ENCODE measurements at regions of chr7 and their contacts with region 1.

Region 1: DNA sequence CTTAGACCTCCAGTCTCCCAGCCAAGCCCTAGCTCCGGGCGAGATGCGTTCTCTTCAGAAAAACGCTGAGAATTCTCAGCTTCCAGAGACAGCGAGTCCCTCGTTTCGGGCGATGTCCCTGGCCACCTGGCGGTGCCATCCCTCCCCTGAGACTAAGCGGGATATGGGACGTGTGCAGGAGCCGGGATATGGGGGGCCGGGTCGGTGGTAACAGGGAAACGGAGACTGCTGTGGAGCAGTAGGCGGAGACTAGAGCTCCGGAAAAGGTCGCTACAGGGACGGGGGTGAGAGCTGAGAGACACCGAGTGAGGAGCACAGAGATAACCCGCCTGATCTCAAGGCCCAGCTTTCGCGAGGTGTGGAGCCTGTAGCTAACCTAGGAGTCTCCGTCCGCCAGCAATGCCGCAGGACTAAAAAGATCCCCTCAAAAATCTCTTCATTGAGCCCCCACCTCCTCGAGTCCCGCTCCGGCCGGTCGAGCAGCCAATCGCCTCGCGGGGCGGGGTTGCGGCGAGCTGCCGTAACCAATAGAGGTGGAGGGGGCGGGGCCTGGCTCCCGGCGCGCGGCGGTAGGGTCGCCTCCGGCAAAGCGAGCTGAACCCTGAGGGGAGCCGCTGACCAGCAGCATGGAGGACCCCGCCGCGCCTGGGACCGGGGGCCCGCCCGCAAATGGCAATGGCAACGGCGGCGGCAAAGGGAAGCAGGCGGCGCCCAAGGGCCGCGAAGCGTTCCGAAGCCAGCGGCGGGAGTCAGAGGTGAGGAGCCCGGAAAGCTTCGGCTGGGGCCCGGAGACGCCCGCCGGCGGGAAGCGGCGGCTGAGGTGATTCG is at the start of gene STRIP2:
- DNase-seq: peak; percentile 94
- H3K4me3 Mint-ChIP-seq: peak within 1 kb of the TSS; percentile 95
- H3K27ac Mint-ChIP-seq: peak within 1 kb of the TSS; percentile 92
- H3K4me1 Mint-ChIP-seq: peaks cover 35% of the 10 kb centered on the region
- H3K27me3 Mint-ChIP-seq: no peaks in the 10 kb centered on the region
- total RNA-seq, gene STRIP2: 74.0 and 79.4 TPM in 2 replicates

Region 2: DNA sequence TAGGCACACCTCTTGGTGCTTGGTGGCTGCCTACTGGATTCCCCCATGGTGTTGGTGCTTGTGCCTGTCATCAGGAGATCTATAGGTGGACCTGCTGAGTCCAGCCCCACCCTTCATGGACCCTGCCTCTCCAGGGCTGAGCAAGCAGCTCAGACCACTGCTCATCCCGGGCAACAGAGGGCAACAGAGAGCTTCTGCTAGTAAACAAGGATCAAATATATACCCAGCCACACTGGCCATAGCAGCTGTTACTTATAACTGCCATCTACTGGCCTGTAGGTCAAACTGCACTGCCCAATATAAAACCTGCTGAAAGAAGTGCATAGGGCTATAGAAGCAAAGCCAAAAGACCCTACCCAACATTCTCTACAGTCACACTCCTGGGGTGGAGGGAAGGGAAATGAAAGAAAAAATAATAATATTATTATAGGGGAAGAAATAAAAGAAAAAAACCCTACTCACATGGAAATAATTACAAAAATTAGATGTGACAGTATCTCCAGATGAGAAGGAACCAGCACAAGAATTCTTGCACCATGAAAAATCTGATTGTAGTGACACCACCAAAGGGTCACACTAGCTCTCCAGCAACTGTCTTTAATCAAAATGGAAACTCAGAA is 1986.6 kb before region 1 on chr7:
- intact Hi-C with region 1: no loop called
- DNase-seq: peak; percentile 56
- H3K4me3 Mint-ChIP-seq: no peak overlapping the region
- H3K27ac Mint-ChIP-seq: no peak overlapping the region
- H3K4me1 Mint-ChIP-seq: no peaks in the 10 kb centered on the region
- H3K27me3 Mint-ChIP-seq: peaks cover 36% of the 10 kb centered on the region

Region 3: GRCh38 chr7:129054438-129055293 is 379.4 kb before region 1 on chr7 and contains the start of gene TNPO3:
- intact Hi-C with region 1: loop called (anchors 10 kb)
- DNase-seq: peak; percentile 87
- H3K4me3 Mint-ChIP-seq: peak within 1 kb of the TSS; percentile 99
- H3K27ac Mint-ChIP-seq: peak within 1 kb of the TSS; percentile 99
- H3K4me1 Mint-ChIP-seq: peaks cover 28% of the 10 kb centered on the region
- H3K27me3 Mint-ChIP-seq: peaks cover 10% of the 10 kb centered on the region
- total RNA-seq, gene TNPO3: 52.8 and 53.2 TPM in 2 replicates

Region 4: GRCh38 chr7:129188372-129188891 is 245.6 kb before region 1 on chr7 and contains the start of gene SMO:
- intact Hi-C with region 1: no loop called
- DNase-seq: no peak
- H3K4me3 Mint-ChIP-seq: peak within 1 kb of the TSS; percentile 70
- H3K27ac Mint-ChIP-seq: no peak within 1 kb of the TSS
- H3K4me1 Mint-ChIP-seq: peaks cover 4% of the 10 kb centered on the region
- H3K27me3 Mint-ChIP-seq: peaks cover 61% of the 10 kb centered on the region
- total RNA-seq, gene SMO: 0.44 and 0.56 TPM in 2 replicates

Region 5: DNA sequence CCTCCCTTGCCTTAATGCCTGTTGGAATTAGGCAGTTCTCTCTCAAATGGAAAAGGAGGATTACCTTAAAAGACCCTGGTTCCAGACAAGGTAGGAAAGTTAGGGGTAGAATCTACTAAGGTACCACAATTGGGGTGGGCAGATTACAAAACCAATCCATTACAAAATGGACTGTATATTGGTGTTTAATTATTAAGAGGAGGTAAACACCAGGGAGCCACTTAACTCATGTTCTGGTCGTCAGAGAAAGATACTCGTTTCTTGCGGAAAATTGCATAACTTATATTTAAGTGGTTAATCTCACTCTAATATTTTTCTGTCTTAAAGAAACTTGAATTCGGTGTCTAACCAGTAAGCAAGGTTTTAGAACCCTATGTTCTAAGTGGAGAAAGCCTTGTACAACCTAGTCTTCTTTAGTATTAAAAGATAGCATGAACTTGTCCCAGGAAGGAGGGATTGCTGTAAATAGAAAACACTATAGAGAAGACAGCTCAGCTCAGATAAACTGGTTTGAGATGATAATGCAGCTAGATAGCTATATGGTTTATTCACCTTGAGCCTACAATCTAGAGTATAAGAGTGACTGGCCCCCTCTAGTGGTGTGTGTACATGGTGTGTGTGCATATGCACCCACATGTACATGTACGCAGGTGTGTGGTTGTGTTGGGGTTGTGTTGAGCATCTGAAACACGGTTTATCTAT is 57.8 kb before region 1 on chr7:
- intact Hi-C with region 1: loop called (anchors 2 kb)
- DNase-seq: peak; percentile 43
- H3K4me3 Mint-ChIP-seq: peak overlapping the region; percentile 35
- H3K27ac Mint-ChIP-seq: no peak overlapping the region
- H3K4me1 Mint-ChIP-seq: peaks cover 54% of the 10 kb centered on the region
- H3K27me3 Mint-ChIP-seq: no peaks in the 10 kb centered on the region

Region 6: DNA sequence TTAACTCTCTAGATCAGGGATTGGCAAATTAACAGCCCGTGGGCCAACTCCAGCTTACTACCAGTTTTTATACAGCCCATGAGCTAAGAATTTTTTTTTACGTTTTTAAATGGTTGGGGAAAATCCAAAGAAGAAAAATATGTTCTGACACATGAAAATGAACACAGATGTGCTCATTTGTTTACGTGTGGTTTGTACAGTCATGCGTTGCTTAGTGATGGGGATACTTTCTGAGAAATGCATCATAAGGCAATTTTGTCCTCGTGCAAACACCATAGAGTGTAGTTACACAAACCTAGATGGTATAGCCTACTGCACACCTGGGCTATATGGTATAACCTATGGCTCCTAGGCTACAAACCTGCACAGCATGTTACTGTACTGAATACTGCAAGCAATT is 60.0 kb after region 1 on chr7:
- intact Hi-C with region 1: loop called (anchors 1 kb)
- DNase-seq: peak; percentile 24
- H3K4me3 Mint-ChIP-seq: no peak overlapping the region
- H3K27ac Mint-ChIP-seq: peak overlapping the region; percentile 85
- H3K4me1 Mint-ChIP-seq: peaks cover 29% of the 10 kb centered on the region
- H3K27me3 Mint-ChIP-seq: no peaks in the 10 kb centered on the region

Region 7: GRCh38 chr7:129611246-129612111 is 177.4 kb after region 1 on chr7 and contains the start of gene NRF1:
- intact Hi-C with region 1: loop called (anchors 2 kb)
- DNase-seq: peak; percentile 89
- H3K4me3 Mint-ChIP-seq: peak within 1 kb of the TSS; percentile 98
- H3K27ac Mint-ChIP-seq: peak within 1 kb of the TSS; percentile 99
- H3K4me1 Mint-ChIP-seq: peaks cover 48% of the 10 kb centered on the region
- H3K27me3 Mint-ChIP-seq: no peaks in the 10 kb centered on the region
- total RNA-seq, gene NRF1: 22.8 and 25.9 TPM in 2 replicates

Region 8: DNA sequence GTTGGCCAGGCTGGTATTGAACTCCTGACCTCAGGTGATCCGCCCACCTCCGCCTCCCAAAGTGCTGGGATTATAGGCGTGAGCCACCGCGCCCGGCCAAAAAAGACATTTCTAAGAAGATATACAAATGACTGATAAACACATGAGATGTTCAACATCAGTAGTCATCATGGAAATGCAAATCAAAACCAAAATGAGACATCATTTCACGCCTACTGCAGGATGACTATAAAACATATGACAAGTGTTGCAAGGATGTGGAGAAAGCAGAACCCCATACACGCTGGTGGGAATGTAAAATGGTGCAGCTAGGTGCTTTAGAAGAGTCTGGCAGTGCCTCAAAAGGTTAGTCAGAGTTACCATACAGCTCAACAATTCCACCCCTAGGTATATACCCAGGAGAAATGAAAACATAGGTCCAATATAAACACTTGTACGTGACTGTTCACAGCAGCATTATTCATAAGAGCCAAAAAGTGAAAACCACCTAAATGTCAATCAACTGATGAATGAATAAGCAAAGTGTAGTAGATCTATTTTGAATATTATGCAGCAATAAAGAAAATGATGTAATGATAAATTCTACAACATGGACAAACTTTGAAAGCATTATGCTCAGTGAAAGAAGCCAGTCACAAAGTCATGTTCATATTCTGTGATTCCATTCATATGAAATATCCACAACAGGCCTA is 746.7 kb after region 1 on chr7:
- intact Hi-C with region 1: loop called (anchors 2 kb)
- DNase-seq: no peak
- H3K4me3 Mint-ChIP-seq: peak overlapping the region; percentile 15
- H3K27ac Mint-ChIP-seq: peak overlapping the region; percentile 92
- H3K4me1 Mint-ChIP-seq: peaks cover 36% of the 10 kb centered on the region
- H3K27me3 Mint-ChIP-seq: no peaks in the 10 kb centered on the region